Tibial artery (tissue), 4 donors: ENCODE measurements at regions of chr10 and their contacts with region 1.

Region 1: DNA sequence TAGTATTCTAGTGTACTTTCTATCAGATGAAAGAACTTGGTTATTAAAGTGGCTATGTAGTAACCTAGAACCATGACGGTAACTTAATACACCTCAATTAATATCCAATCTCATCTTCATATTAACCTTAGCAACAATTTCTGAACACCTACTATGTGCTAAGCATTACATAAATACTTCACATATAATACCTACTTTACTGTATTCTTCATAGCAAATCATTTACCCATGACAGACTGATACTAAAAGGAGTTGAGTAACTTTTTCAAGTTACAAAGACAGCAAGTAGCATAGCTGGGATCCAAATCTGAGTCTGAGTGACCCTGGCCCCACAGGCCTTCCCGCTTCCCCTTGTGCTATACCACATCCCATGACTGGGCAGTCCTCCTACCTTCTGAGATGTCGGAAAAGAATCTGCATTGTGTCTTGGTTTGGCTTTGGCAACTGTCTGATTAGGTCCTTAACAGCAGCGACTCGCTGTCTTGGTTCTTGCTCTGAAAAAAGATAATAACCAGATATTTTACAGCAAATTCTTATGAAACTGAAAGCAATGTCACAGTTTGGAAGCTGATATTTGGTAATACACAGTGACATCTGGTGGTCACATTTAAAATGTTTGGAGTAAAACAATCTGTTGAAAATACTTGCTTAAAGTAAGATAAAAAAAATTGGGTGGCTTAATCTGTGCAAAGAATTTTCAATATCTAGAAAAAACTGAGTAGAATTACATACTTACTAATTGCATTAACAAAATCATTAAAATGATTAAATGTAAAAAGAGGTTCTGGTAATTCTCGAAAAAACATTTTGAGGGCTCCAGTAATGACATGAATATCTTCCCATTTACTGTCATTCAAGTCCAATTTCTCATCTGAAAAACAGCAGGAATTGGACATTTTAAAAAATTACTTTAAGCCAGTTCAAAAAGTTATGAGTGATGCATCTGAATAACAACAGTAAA is 120.1 kb downstream of the ARHGAP12 start:
- DNase-seq: peak in 1 of 2 donors; percentile 25
- H3K4me3 ChIP-seq: peak overlapping the region; percentile 28 to 35
- H3K27ac ChIP-seq: peak overlapping the region in 1 of 2 donors; percentile 68
- H3K4me1 ChIP-seq: peaks cover 0 to 3% (median 0%) of the 10 kb centered on the region in 4 donors
- H3K27me3 ChIP-seq: no peaks in the 10 kb centered on the region
- CTCF ChIP-seq: peak; percentile 44 to 81

Region 2: DNA sequence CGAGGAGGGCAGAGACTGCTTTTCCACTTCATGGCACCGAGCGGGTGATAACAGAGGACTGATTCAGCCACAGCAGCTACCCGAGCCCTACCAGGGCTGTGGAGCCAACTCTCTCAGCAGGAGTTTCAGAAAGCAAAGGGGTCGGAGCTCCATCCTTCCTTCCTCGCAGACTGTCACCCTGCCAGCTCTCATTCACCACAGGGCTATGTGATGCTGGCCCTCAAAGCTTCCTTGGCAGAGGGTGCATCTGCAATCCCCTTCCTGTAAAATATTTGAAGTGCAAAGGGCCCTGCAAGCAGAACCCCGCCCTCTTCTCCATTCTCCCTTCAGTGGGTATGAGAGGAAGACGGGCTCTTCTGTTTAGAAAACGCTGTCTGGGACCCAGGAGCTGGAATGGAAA is 1073.6 kb before region 1 on chr10:
- intact Hi-C with region 1: loop called (anchors 5 kb)
- DNase-seq: peak in 1 of 2 donors; percentile 40
- H3K4me3 ChIP-seq: no peak overlapping the region
- H3K27ac ChIP-seq: no peak overlapping the region
- H3K4me1 ChIP-seq: peaks cover 0 to 25% (median 4%) of the 10 kb centered on the region in 4 donors
- H3K27me3 ChIP-seq: no peaks in the 10 kb centered on the region
- CTCF ChIP-seq: no peak

Region 3: DNA sequence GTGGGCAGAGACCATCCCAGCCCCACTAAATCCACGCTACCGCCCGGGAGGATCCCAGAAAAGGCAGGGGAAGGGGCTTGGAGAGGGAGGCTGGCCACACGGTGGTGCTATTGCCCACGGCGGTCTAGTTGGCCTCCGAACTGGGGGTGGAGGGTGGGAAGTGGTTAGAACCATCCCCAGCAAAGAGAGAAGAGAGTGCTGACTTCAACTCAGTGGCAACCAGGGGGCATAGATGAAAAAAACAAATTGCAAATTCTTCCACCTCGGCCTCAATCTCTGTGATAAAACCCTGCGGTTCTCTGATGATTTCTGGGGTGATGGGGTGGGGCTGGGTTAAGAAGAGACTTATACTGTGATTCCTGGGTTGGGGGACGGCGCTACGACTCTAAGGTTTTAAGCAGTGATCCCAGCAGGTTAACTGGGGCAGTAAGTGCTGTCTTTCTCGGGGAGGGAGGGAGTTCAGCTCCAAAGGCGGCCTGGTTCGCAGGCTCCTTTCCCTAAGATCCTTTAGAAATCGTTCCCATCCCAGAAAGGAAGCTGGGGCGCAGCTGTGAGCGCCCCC is 1024.5 kb before region 1 on chr10:
- intact Hi-C with region 1: loop called (anchors 5 kb)
- DNase-seq: peak; percentile 85 to 92
- H3K4me3 ChIP-seq: peak overlapping the region; percentile 74 to 76
- H3K27ac ChIP-seq: peak overlapping the region; percentile 97
- H3K4me1 ChIP-seq: peaks cover 0 to 22% (median 20%) of the 10 kb centered on the region in 4 donors
- H3K27me3 ChIP-seq: no peaks in the 10 kb centered on the region
- CTCF ChIP-seq: peak; percentile 89 to 93

Region 4: DNA sequence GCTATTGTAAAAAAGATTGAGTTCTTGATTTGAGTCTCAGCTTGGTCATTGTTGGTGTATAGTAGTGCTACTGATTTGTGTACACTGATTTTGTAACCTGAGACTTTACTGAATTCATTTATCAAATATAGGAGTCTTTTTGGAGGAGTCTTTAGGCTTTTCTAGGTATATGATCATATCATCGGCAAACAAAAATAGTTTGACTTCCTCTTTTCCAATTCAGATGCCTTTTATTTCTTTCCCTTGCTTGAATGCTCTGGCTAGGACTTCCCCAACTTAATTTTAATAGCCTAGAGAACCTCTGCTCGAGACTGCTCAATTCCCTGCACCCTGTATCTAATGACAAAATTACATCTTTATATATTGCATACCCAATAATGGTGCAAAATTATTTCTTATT is 791.8 kb after region 1 on chr10:
- intact Hi-C with region 1: no loop called
- DNase-seq: no peak
- H3K4me3 ChIP-seq: no peak overlapping the region
- H3K27ac ChIP-seq: no peak overlapping the region
- H3K4me1 ChIP-seq: no peaks in the 10 kb centered on the region
- H3K27me3 ChIP-seq: no peaks in the 10 kb centered on the region
- CTCF ChIP-seq: no peak

Region 5: GRCh38 chr10:32650246-32650655 is 841.7 kb after region 1 on chr10:
- intact Hi-C with region 1: no loop called
- DNase-seq: no peak
- H3K4me3 ChIP-seq: no peak overlapping the region
- H3K27ac ChIP-seq: no peak overlapping the region
- H3K4me1 ChIP-seq: no peaks in the 10 kb centered on the region
- H3K27me3 ChIP-seq: no peaks in the 10 kb centered on the region
- CTCF ChIP-seq: no peak